HepG2 (cell line): ENCODE measurements at regions of chr9 and their contacts with region 1.

Region 1: DNA sequence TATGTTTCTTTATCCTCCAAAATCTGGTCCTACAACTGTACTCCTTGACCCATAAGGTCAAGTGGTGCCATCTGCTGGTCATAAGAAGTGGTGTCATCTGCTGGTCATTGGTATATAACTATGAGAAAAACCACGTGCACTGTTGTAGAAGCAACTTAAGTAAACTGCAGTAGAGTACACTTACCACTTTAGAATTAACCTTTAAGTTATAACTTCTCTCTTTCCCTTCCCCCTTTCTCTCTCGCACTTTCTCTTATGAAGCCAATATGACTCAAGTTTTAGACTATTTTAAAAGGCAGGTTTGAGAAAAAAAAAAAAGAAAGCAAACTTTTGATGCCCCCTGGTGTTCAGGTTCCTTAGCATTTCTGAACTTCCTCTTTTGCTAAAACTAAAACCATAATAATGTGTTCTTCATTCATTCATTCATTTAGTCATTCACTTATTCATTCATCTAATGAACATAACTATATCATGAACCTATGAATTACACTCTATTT is 12.8 kb upstream of the MTAP start:
- DNase-seq: peak; percentile 83
- ATAC-seq: peak; percentile 99
- H3K4me3 ChIP-seq: peak overlapping the region in 1 of 3 experiments; percentile 32; a peak in 1 of 6 replicates
- H3K27ac ChIP-seq: no peak overlapping the region
- H3K4me1 ChIP-seq: no peaks in the 10 kb centered on the region
- H3K27me3 ChIP-seq: no peaks in the 10 kb centered on the region
- CTCF ChIP-seq: peak; percentile 79
- EP300 ChIP-seq: no peak
- POLR2A ChIP-seq: no peak
- RAD21 ChIP-seq: peak; percentile 37; the same call in 1 of the 2 replicates

Region 2: DNA sequence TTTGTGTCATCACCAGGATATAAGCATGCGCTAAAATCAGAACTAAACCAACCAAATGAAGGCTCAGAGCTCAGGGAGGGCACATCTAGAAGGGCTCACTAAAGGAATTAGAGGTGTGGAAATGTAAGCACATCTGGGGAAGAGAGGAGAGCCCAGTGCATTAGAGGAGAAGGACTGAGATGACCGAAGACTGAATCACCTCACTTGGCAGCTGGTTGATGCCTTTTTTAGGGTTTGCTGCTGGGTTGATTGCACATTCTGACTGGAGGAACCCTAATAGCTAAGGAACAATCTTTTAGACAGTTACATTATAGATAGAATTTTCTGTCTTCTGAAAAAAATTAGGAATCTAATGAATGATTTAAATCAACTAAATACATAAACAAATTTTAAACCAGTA is 614.9 kb before region 1 on chr9:
- CTCF ChIA-PET with region 1: no interaction called
- POLR2A ChIA-PET with region 1: no interaction called
- in situ Hi-C with region 1: loop called (anchors 25 kb)
- intact Hi-C with region 1: no loop called
- DNase-seq: no peak
- ATAC-seq: no peak
- H3K4me3 ChIP-seq: no peak overlapping the region
- H3K27ac ChIP-seq: no peak overlapping the region
- H3K4me1 ChIP-seq: no peaks in the 10 kb centered on the region
- H3K27me3 ChIP-seq: no peaks in the 10 kb centered on the region
- CTCF ChIP-seq: no peak
- EP300 ChIP-seq: no peak
- POLR2A ChIP-seq: no peak
- RAD21 ChIP-seq: no peak

Region 3: DNA sequence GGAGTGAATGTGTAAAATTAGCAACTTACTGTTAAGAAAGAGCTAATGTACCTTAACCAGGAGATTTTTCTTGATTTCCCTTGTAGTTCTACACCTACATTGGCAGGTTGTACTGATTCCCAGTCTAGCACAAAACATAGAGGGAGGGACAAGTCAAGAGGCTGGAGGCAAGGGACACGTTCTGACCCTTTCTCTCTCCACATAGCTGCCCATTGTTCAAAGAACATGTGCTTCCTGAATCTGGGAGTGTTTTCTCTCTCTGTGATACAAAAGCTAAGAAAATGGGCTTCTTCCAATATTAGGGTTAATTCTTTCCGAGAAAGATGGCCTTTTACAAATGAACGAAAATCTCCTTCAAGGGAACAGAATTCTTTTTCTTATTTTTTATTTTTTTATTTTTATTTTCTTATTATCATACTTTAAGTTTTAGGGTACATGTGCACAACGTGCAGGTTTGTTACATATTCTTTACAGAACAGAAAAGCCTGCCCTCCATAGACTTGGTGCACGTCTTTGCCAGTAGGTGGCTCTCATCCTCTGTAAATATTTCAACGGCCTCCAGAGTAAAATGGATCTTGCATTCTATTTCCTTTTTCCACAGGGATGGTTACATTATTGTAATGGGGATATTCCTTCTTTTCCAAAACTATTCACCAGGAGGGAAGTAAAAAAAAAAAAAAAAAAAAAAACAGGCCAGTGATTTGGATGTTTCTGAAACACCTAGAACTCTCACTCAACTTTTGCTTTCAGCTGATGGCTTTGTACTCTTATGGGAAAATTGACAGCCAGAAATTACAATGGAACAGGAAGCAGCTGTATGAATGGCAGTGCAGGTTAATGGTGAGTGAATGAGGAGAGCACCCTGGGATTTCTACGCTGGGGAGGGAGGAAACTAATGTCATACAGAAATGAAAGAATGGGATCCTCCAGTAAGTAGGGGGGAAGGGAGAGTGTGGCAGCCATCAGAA is 471.3 kb before region 1 on chr9:
- CTCF ChIA-PET with region 1: interaction called, 6 read pairs
- POLR2A ChIA-PET with region 1: no interaction called
- in situ Hi-C with region 1: no loop called
- intact Hi-C with region 1: loop called (anchors 1 kb)
- DNase-seq: peak; percentile 24
- ATAC-seq: peak; percentile 92
- H3K4me3 ChIP-seq: no peak overlapping the region
- H3K27ac ChIP-seq: no peak overlapping the region
- H3K4me1 ChIP-seq: no peaks in the 10 kb centered on the region
- H3K27me3 ChIP-seq: no peaks in the 10 kb centered on the region
- CTCF ChIP-seq: peak; percentile 70
- EP300 ChIP-seq: no peak
- POLR2A ChIP-seq: no peak
- RAD21 ChIP-seq: no peak

Region 4: DNA sequence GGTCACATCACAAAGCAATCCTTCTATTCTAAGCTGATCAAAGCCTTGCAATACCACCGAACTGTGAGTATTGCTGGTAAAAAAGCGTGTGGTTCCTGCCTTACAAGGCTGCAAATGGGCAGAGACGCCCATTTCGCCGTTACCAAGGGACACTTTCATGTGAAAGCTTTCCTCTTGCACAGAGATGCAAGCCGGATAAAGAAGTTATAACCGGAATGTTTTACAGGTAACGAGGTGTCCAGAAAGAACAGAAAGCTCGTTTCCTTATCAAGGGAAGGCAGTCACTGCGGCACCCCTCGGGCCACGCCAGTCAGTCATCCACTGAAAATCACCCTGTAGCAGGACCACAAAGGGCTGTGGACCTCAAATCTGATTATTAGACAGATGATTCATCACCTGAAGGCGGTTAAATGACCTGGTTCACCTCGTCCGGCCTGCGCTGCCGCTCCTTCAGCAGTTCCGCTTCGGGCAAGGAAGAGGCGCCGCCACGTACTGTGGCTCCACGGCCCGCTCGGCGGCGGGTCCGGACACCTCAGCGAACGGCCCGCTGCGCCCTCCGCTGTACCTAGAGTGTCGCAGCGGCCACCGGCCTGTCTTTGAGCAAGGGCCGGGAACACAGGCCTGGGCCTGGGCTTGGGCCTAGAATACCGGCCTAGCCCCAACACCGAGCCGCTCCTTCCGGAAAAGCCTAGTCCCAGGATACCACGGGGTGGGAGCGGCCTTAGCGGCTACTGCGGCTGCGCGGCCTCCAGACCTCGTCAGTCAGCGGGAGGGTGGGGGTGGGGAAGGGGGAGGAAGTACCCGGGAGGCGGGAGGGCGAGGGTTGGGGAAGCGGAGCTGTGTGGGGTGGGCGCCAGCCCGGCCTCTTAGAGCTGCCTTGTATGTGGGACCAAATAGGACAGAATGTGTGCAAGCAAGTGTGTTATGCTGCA is 454.6 kb before region 1 on chr9 and contains the start of gene KLHL9:
- CTCF ChIA-PET with region 1: no interaction called
- POLR2A ChIA-PET with region 1: no interaction called
- in situ Hi-C with region 1: loop called (anchors 10 kb)
- intact Hi-C with region 1: no loop called
- DNase-seq: peak; percentile 82
- ATAC-seq: peak; percentile 98
- H3K4me3 ChIP-seq: peak within 1 kb of the TSS; percentile 78 to 88 (median 86)
- H3K27ac ChIP-seq: peak within 1 kb of the TSS; percentile 93
- H3K4me1 ChIP-seq: peaks cover 38% of the 10 kb centered on the region
- H3K27me3 ChIP-seq: no peaks in the 10 kb centered on the region; a peak in 1 of 5 replicates
- CTCF ChIP-seq: peak; percentile 18; the same call in 1 of the 2 replicates
- EP300 ChIP-seq: no peak
- POLR2A ChIP-seq: peak; percentile 64 to 67; a peak in 3 of 4 replicates
- RAD21 ChIP-seq: 0 out of 2 replicates have a peak, but pooled peaks have one; percentile 27
- total RNA-seq, gene KLHL9: 17.7 and 32.7 TPM in 2 replicates

Region 5: GRCh38 chr9:21709464-21710058 is 80.0 kb before region 1 on chr9:
- CTCF ChIA-PET with region 1: interaction called, 19 read pairs
- POLR2A ChIA-PET with region 1: no interaction called
- in situ Hi-C with region 1: no loop called
- intact Hi-C with region 1: loop called (anchors 1 kb)
- DNase-seq: peak; percentile 37
- ATAC-seq: peak; percentile 80
- H3K4me3 ChIP-seq: no peak overlapping the region
- H3K27ac ChIP-seq: no peak overlapping the region
- H3K4me1 ChIP-seq: no peaks in the 10 kb centered on the region
- H3K27me3 ChIP-seq: no peaks in the 10 kb centered on the region
- CTCF ChIP-seq: peak; percentile 66
- EP300 ChIP-seq: no peak
- POLR2A ChIP-seq: no peak
- RAD21 ChIP-seq: no peak